Prostate gland (tissue), 2 donors: ENCODE measurements at regions of chr11 and their contacts with region 1.

Region 1: DNA sequence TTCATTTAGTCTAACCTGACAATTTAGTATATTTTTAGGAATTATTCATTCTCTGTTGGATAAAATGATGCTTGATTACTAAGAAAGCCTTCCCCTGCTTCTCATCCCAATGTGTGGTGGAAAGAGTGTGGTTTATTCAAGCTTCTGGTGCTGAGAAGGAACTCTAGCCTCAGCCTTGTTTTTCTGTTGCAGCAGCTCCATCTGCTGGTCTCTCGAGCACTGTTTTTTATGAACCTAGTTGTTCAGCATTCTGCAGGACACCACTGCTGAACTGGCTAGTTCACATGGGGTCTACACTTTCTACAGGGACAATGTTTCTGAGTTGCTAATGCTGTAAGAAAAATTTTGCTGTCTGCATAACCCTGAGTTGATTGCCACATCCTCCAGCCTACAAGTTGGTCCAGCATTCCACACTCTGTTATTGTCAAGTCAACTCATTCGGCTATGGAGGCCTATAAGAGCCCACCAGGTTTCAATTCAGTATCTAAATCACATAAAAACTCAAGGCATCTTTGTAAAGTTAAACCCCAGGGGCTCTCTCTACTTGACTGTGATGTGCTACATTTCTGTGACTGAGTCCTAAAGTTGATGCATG is 14.3 kb downstream of the OR2AG2 start:
- DNase-seq: peak; percentile 20
- H3K4me3 ChIP-seq: no peak overlapping the region
- H3K27ac ChIP-seq: no peak overlapping the region
- H3K4me1 ChIP-seq: no peaks in the 10 kb centered on the region
- H3K27me3 ChIP-seq: no peaks in the 10 kb centered on the region
- CTCF ChIP-seq: peak in 3 of 4 experiments; percentile 41 to 53 (median 46)
- POLR2A ChIP-seq: no peak

Region 2: DNA sequence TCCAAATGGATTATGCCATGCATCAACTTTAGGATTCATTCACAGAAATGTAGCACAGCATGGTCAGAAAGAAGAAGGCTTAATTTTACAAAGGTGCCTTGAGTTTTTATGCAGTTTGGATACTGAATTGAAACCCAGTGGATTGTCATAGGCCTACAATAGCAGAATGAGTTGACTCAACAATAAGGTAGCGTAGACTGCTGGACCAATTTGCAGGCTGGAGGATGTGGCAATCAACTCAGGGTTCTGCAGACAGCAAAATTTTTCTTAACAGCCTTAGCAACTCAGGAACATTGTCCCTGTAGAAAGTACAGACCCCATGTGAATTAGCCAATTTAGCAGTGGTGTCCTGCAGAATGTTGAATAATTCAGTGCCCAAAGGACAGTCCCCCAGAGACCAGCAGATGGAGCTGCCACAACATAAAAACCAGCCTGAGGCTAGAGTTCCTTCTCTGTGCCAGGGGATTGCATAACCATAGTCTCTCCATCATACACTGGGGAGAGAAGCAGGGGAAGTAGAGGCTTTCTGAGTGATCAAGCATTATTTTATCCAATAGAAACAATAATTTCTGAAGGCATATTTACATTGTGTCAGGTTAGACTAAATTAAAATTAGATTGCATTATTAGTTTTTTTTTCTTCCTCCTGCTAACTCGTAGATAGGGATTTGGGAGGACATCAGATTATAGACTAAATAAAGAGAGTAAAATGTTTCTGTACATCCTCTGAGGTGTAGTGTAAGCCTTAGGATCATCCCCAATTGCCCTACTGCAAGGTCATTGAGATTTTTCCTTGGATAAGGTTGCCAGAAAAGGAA is 54.0 kb before region 1 on chr11:
- intact Hi-C with region 1: loop called (anchors 5 kb)
- DNase-seq: peak; percentile 48
- H3K4me3 ChIP-seq: no peak overlapping the region
- H3K27ac ChIP-seq: no peak overlapping the region
- H3K4me1 ChIP-seq: no peaks in the 10 kb centered on the region
- H3K27me3 ChIP-seq: no peaks in the 10 kb centered on the region
- CTCF ChIP-seq: peak in 3 of 4 experiments; percentile 46 to 63 (median 58)
- POLR2A ChIP-seq: no peak